ENCODE measurements at regions of chr12 and their contacts with region 1.

Region 1: GRCh38 chr12:709455-710020 is 42.8 kb upstream of the WNK1 start:
- DNase-seq: no peak
- H3K4me3 ChIP-seq: no peak overlapping the region
- H3K4me3 Mint-ChIP-seq: no peak overlapping the region
- H3K27ac ChIP-seq: no peak overlapping the region
- H3K27ac Mint-ChIP-seq: no peak overlapping the region
- H3K4me1 ChIP-seq: no peaks in the 10 kb centered on the region
- H3K4me1 Mint-ChIP-seq: no peaks in the 10 kb centered on the region
- H3K27me3 ChIP-seq: no peaks in the 10 kb centered on the region
- H3K27me3 Mint-ChIP-seq: no peaks in the 10 kb centered on the region

Region 2: DNA sequence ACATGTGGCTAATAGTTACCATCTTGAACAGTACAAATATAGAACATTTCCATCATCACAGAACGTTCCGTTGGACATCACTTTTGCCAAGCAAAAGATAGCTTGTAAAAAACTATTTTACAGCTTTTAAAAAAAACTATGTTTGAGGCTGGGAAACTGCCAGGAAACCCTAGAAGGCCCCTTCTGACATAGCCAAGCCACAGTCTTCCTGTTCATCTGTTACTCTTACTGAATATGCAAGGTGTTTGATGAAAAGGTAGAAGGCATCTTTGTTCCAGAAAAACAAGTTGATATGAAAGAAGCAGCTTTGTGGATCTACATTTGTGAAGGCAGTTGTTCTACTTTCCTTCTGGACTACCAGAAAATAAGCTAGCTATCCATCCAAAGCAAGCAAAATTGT is 19.2 kb after region 1 on chr12:
- CTCF ChIA-PET with region 1: no interaction called
- POLR2A ChIA-PET with region 1: interaction called, 14 read pairs
- DNase-seq: peak in 2 of 5 donors; percentile 47 to 75
- H3K4me3 ChIP-seq: no peak overlapping the region
- H3K4me3 Mint-ChIP-seq: peak overlapping the region in 4 of 7 donors; percentile 6 to 74 (median 46)
- H3K27ac ChIP-seq: no peak overlapping the region
- H3K27ac Mint-ChIP-seq: peak overlapping the region in 7 of 8 donors; percentile 60 to 94 (median 84)
- H3K4me1 ChIP-seq: peaks cover 61% of the 10 kb centered on the region
- H3K4me1 Mint-ChIP-seq: peaks cover 39 to 67% (median 65%) of the 10 kb centered on the region in 3 donors
- H3K27me3 ChIP-seq: no peaks in the 10 kb centered on the region
- H3K27me3 Mint-ChIP-seq: no peaks in the 10 kb centered on the region

Measured in CD8-positive, alpha-beta memory T cell (primary cell).